GM12878 (cell line): ENCODE measurements at regions of chr7 and their contacts with region 1.

Region 1: GRCh38 chr7:55572378-55573233 is at the start of gene VOPP1:
- DNase-seq: no peak
- ATAC-seq: peak; percentile 20
- H3K4me3 ChIP-seq: peak within 1 kb of the TSS; percentile 98
- H3K27ac ChIP-seq: peak within 1 kb of the TSS; percentile 93
- H3K4me1 ChIP-seq: peaks cover 22% of the 10 kb centered on the region
- H3K27me3 ChIP-seq: no peaks in the 10 kb centered on the region
- CTCF ChIP-seq: no peak
- EP300 ChIP-seq: no peak
- POLR2A ChIP-seq: peak; percentile 63
- RAD21 ChIP-seq: no peak
- polyA plus RNA-seq, gene VOPP1: 32.8 to 78.5 TPM

Region 2: GRCh38 chr7:55073945-55074499 is 498.6 kb before region 1 on chr7:
- CTCF ChIA-PET with region 1: no interaction called
- POLR2A ChIA-PET with region 1: no interaction called
- RAD21 ChIA-PET with region 1: no interaction called
- SMC1A ChIA-PET with region 1: no interaction called
- in situ Hi-C with region 1: no loop called
- intact Hi-C with region 1: loop called (anchors 10 kb)
- DNase-seq: peak; percentile 91
- ATAC-seq: peak; percentile 94
- H3K4me3 ChIP-seq: no peak overlapping the region
- H3K27ac ChIP-seq: peak overlapping the region; percentile 77
- H3K4me1 ChIP-seq: peaks cover 24% of the 10 kb centered on the region
- H3K27me3 ChIP-seq: no peaks in the 10 kb centered on the region
- CTCF ChIP-seq: no peak
- EP300 ChIP-seq: peak in 1 of 2 experiments; percentile 54; a peak in 1 of 4 replicates
- POLR2A ChIP-seq: peak; percentile 64
- RAD21 ChIP-seq: no peak

Region 3: GRCh38 chr7:55509322-55509721 is 63.3 kb before region 1 on chr7:
- CTCF ChIA-PET with region 1: interaction called, 3 read pairs
- POLR2A ChIA-PET with region 1: interaction called, 3 read pairs
- RAD21 ChIA-PET with region 1: interaction called, 79 read pairs
- SMC1A ChIA-PET with region 1: interaction called, 74 read pairs
- in situ Hi-C with region 1: no loop called
- intact Hi-C with region 1: no loop called
- DNase-seq: no peak
- ATAC-seq: peak; percentile 46
- H3K4me3 ChIP-seq: no peak overlapping the region
- H3K27ac ChIP-seq: peak overlapping the region; percentile 51
- H3K4me1 ChIP-seq: peaks cover 75% of the 10 kb centered on the region
- H3K27me3 ChIP-seq: no peaks in the 10 kb centered on the region
- CTCF ChIP-seq: peak in 1 of 3 experiments; percentile 12; a peak in 1 of 6 replicates
- EP300 ChIP-seq: no peak
- POLR2A ChIP-seq: no peak
- RAD21 ChIP-seq: no peak

Region 4: DNA sequence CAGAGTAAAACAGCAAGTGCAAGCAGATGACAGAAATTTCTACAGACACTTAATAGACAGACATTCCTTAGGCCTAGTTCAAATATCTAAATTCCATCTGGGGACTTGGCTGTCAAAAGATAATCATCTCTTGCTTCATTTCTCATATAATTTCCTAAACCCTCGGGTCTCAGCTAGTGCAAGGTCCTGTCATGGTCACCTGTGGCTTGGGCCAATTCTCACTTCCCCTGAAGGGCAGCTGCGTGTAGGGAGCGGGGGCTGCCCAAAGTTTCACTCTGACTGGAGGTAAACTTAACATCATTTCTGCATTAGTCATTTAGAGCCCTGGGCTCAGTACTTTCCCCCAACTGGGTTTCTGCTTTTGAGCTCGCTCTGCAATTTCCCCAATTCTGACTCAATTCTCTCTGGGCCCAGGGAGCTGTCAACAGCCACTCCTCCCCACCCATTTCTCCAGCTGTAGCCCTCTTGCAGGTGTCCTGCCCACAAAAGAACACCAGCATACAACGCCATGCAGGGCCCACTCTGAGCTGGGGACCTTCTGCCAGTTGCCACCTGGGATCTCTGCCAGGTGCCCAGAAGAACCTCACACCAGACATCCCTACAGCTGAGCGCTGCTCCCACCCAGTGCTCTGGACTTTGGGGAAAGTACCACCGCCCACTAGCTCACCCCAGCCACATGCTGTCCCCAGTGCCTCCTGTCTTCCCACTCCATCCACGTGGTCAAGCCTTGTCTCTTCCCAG is 38.3 kb before region 1 on chr7:
- CTCF ChIA-PET with region 1: interaction called, 45 read pairs
- POLR2A ChIA-PET with region 1: interaction called, 156 read pairs
- RAD21 ChIA-PET with region 1: interaction called, 245 read pairs
- SMC1A ChIA-PET with region 1: interaction called, 263 read pairs
- in situ Hi-C with region 1: no loop called
- intact Hi-C with region 1: loop called (anchors 1 kb)
- DNase-seq: peak; percentile 99
- ATAC-seq: peak; percentile 68
- H3K4me3 ChIP-seq: peak overlapping the region; percentile 78
- H3K27ac ChIP-seq: peak overlapping the region; percentile 100
- H3K4me1 ChIP-seq: peaks cover 84% of the 10 kb centered on the region
- H3K27me3 ChIP-seq: no peaks in the 10 kb centered on the region
- CTCF ChIP-seq: no peak
- EP300 ChIP-seq: peak; percentile 100
- POLR2A ChIP-seq: peak; percentile 85
- RAD21 ChIP-seq: peak; percentile 36

Region 5: GRCh38 chr7:55552320-55553023 is 20.1 kb before region 1 on chr7:
- CTCF ChIA-PET with region 1: interaction called, 35 read pairs
- POLR2A ChIA-PET with region 1: interaction called, 35 read pairs
- RAD21 ChIA-PET with region 1: interaction called, 87 read pairs
- SMC1A ChIA-PET with region 1: interaction called, 139 read pairs
- in situ Hi-C with region 1: no loop called
- intact Hi-C with region 1: loop called (anchors 1 kb)
- DNase-seq: no peak
- ATAC-seq: no peak
- H3K4me3 ChIP-seq: no peak overlapping the region
- H3K27ac ChIP-seq: no peak overlapping the region
- H3K4me1 ChIP-seq: peaks cover 94% of the 10 kb centered on the region
- H3K27me3 ChIP-seq: no peaks in the 10 kb centered on the region
- CTCF ChIP-seq: no peak
- EP300 ChIP-seq: no peak
- POLR2A ChIP-seq: no peak
- RAD21 ChIP-seq: no peak

Region 6: GRCh38 chr7:55593515-55594318 is 21.1 kb after region 1 on chr7:
- CTCF ChIA-PET with region 1: interaction called, 13 read pairs
- POLR2A ChIA-PET with region 1: interaction called, 3 read pairs
- RAD21 ChIA-PET with region 1: interaction called, 5 read pairs
- SMC1A ChIA-PET with region 1: interaction called, 5 read pairs
- in situ Hi-C with region 1: no loop called
- intact Hi-C with region 1: no loop called
- DNase-seq: no peak
- ATAC-seq: peak; percentile 84
- H3K4me3 ChIP-seq: no peak overlapping the region
- H3K27ac ChIP-seq: no peak overlapping the region
- H3K4me1 ChIP-seq: peaks cover 9% of the 10 kb centered on the region; the same call in 1 of the 2 replicates
- H3K27me3 ChIP-seq: no peaks in the 10 kb centered on the region
- CTCF ChIP-seq: peak; percentile 73 to 94 (median 90)
- EP300 ChIP-seq: no peak
- POLR2A ChIP-seq: no peak
- RAD21 ChIP-seq: peak; percentile 54